ENCODE measurements at regions of chr5 and their contacts with region 1.

Region 1: GRCh38 chr5:127176769-127177168 is 103.5 kb upstream of the C5orf63 start:
- DNase-seq: no peak
- H3K4me3 ChIP-seq: no peak overlapping the region
- H3K27ac ChIP-seq: no peak overlapping the region
- H3K4me1 ChIP-seq: no peaks in the 10 kb centered on the region
- H3K27me3 ChIP-seq: no peaks in the 10 kb centered on the region
- CTCF ChIP-seq: no peak
- POLR2A ChIP-seq: no peak

Region 2: DNA sequence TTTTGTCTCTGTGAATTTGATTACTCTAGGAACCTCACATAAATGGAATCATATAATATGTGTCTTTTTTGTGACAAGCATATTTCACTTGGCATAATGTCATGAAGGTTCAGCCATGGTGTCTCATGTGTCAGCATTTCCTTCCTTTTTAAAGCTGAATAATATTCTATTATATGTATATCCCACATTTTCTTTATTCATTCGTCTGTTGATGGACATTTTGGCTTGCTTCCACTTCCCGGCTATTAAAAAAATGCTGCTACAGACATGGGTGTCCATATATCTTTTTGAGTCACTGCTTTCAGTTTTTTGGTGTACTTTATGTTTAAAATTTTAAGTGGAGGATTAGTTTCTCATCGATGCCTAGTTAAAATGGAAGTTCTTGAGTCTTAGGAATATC is 43.7 kb before region 1 on chr5:
- CTCF ChIA-PET with region 1: no interaction called
- POLR2A ChIA-PET with region 1: no interaction called
- dilution Hi-C with region 1: no loop called
- intact Hi-C with region 1: loop called (anchors 5 kb)
- DNase-seq: peak; percentile 91
- H3K4me3 ChIP-seq: no peak overlapping the region
- H3K27ac ChIP-seq: no peak overlapping the region
- H3K4me1 ChIP-seq: peaks cover 11% of the 10 kb centered on the region
- H3K27me3 ChIP-seq: peaks cover 0 to 2% of the 10 kb centered on the region in 2 experiments
- CTCF ChIP-seq: no peak
- POLR2A ChIP-seq: no peak

Region 3: DNA sequence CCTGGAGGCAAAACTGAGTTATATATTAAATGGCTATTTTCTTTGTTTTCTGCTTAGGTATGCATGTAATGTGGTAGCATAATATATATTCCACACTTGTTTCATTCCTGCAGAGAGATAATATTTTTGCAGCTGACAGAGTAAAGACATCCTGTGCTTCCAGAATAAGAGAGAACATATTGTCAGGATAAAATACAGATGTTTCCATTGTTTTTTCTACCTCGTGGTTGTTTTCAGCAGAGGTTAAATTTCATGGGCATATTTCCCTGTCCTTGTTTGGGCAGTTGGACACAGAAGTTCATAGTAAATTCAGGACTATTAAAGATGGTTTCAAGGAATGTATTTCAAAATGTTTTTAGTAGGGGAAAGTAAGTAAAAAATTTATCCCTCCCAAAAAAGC is 66.2 kb after region 1 on chr5:
- CTCF ChIA-PET with region 1: no interaction called
- POLR2A ChIA-PET with region 1: no interaction called
- dilution Hi-C with region 1: no loop called
- intact Hi-C with region 1: loop called (anchors 5 kb)
- DNase-seq: no peak
- H3K4me3 ChIP-seq: no peak overlapping the region
- H3K27ac ChIP-seq: no peak overlapping the region
- H3K4me1 ChIP-seq: no peaks in the 10 kb centered on the region
- H3K27me3 ChIP-seq: peaks cover 2 to 3% of the 10 kb centered on the region in 2 experiments
- CTCF ChIP-seq: no peak
- POLR2A ChIP-seq: no peak